ENCODE measurements at regions of chr13 and their contacts with region 1.

Region 1: GRCh38 chr13:110455941-110456340 is 105.6 kb downstream of the RAB20 start:
- DNase-seq: peak; percentile 53
- H3K4me3 Mint-ChIP-seq: no peak overlapping the region
- H3K27ac Mint-ChIP-seq: no peak overlapping the region
- H3K4me1 Mint-ChIP-seq: peaks cover 8% of the 10 kb centered on the region
- H3K27me3 Mint-ChIP-seq: no peaks in the 10 kb centered on the region
- CTCF ChIP-seq: peak; percentile 19

Region 2: DNA sequence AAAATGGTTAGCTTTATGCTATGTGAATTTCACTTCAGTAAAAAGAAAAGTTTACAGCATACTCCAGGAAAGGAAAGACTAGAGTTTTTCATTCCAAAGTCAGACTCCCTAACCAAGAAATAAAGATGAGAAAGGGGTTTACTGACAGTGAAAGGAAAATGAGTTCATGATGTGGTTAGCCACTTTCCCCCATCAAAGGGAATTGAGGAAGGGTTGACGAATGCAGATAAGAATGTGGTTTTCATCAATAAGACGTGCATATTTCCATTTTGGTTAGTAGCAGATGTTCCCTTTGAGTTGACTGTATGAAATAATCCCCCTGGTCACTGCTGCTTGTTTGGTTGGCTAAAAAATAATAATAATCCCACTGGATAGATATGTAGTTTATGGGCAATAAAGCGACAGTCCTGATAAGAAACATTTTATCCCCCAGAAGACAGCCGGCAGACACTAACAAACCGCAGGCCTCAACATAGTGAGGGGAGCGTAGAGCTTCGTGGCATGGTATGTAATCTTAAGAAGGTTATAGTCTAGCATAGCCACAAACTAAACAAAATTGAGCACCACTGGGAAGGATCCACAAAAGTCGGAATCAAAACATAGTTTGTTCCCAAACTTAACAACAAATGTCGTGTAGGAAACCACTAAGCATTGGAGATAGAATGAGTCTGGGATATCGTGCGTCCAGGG is 34.1 kb before region 1 on chr13:
- CTCF ChIA-PET with region 1: no interaction called
- intact Hi-C with region 1: no loop called
- DNase-seq: no peak
- H3K4me3 Mint-ChIP-seq: no peak overlapping the region
- H3K27ac Mint-ChIP-seq: no peak overlapping the region
- H3K4me1 Mint-ChIP-seq: no peaks in the 10 kb centered on the region
- H3K27me3 Mint-ChIP-seq: no peaks in the 10 kb centered on the region
- CTCF ChIP-seq: no peak

Region 3: DNA sequence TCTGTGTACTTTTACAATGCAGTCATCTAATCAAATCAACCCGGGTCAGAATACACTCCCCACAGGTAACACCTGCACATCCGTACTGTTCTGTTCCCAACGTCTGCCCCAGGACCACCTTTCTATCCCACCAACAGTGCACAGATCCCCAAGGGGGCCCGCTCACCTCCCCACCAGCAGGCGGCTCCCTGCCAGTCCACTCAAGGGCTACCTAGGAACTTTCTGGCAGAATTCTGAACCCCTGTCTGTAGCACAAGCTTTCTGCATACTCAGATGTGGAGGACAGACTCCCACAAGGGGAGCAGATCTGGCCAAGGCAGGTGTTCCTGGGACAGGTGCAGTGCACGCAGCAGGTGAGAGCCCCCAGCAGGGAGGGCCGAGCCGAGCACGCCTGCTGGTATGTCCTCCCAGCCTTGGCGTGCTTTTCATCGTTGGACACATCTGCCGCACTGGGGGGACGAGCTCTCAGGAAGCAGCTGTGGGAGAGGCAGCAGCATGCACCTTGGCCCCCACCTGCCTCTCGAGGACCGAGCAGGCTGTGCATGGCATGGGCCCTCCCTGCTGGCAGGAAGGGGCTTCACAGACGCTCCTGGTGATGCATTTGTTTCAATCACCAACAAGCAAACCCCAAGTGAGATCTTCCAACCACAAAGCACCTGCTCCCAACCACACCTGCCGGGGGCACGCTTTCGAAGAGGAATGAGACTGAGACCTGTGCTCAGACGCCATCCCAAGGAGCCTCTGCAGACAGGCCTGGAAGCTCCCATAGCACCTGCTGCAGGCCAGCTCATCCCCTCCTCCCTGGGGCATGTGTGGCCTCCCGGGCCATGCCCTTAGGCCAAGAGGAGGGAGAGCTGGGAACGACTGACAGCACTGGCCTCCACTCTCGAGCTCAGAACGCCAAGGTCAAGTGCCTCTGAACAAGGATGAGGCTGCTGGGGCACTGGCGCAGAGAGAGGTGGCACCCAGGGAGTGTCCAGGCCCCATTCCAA is 69.7 kb after region 1 on chr13:
- CTCF ChIA-PET with region 1: interaction called, 6 read pairs
- intact Hi-C with region 1: loop called (anchors 2 kb)
- DNase-seq: no peak
- H3K4me3 Mint-ChIP-seq: peak overlapping the region; percentile 19
- H3K27ac Mint-ChIP-seq: no peak overlapping the region
- H3K4me1 Mint-ChIP-seq: peaks cover 8% of the 10 kb centered on the region
- H3K27me3 Mint-ChIP-seq: no peaks in the 10 kb centered on the region
- CTCF ChIP-seq: no peak

Measured in Calu3 (cell line).